AG04449 (cell line): ENCODE measurements at regions of chr4 and their contacts with region 1.

Region 1: DNA sequence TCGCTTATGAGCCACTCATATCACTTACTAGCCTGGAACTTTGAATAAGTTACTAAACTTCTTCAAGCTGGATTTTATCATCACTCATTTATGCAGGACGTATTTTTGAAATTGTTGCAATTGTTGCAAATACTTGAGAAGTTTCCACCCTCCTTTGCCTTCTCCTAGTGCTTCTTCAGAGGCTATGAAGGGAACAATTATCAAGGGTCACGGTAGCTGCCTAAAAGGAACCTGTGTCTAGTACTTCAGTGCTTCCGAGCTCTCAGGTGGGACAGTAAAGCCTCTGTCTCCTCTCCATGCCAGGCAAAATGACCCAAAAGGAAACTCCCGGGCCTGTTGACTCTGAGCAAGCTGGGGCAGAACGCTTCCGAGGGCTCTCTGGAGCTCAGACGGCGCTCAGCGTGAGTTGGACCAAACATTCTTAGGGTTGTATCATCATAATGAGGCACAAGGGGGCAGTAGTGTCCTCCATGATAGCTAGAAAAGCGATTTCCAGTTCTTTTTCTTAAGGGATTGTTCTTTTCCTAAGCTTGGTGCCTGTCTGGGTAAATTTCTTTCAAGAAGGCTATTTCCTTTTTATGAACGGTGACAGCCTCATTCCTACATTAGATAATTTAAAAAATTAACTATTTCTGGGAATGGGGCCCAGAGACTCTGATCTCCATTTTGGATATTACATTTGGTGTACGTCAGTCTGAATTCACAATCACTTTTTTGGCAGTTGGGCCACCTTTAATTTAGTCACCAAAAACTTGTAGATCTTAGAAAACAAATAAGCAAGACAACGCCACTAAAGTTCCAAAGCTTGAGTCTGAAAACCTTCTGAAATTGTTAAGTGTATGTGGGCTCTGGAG is 73.1 kb downstream of the PACRGL start:
- DNase-seq: peak; percentile 5
- H3K4me3 ChIP-seq: no peak overlapping the region
- CTCF ChIP-seq: peak; percentile 57

Region 2: GRCh38 chr4:20760053-20760452 is 13.3 kb before region 1 on chr4:
- CTCF ChIA-PET with region 1: interaction called, 19 read pairs
- POLR2A ChIA-PET with region 1: no interaction called
- DNase-seq: no peak
- H3K4me3 ChIP-seq: no peak overlapping the region
- CTCF ChIP-seq: no peak

Region 3: GRCh38 chr4:20787940-20788665 is 14.7 kb after region 1 on chr4:
- CTCF ChIA-PET with region 1: interaction called, 16 read pairs
- POLR2A ChIA-PET with region 1: no interaction called
- DNase-seq: no peak
- H3K4me3 ChIP-seq: no peak overlapping the region
- CTCF ChIP-seq: no peak

Region 4: GRCh38 chr4:21134994-21135393 is 361.6 kb after region 1 on chr4:
- CTCF ChIA-PET with region 1: interaction called, 13 read pairs
- POLR2A ChIA-PET with region 1: no interaction called
- DNase-seq: no peak
- H3K4me3 ChIP-seq: no peak overlapping the region
- CTCF ChIP-seq: no peak

Region 5: GRCh38 chr4:21469438-21470300 is 696.3 kb after region 1 on chr4:
- CTCF ChIA-PET with region 1: interaction called, 31 read pairs
- POLR2A ChIA-PET with region 1: no interaction called
- DNase-seq: no peak
- H3K4me3 ChIP-seq: no peak overlapping the region
- CTCF ChIP-seq: peak; percentile 7

Region 6: GRCh38 chr4:21765810-21766407 is 992.5 kb after region 1 on chr4:
- CTCF ChIA-PET with region 1: interaction called, 108 read pairs
- POLR2A ChIA-PET with region 1: no interaction called
- DNase-seq: no peak
- H3K4me3 ChIP-seq: no peak overlapping the region
- CTCF ChIP-seq: peak; percentile 86